Mucosa of descending colon (tissue), 3 donors: ENCODE measurements at regions of chr10 and their contacts with region 1.

Region 1: GRCh38 chr10:4849555-4850242 is 23.7 kb downstream of the AKR1E2 start:
- DNase-seq: peak; percentile 89 to 96 (median 92)
- ATAC-seq: peak; percentile 98
- H3K4me3 ChIP-seq: no peak overlapping the region
- H3K4me1 ChIP-seq: no peaks in the 10 kb centered on the region
- CTCF ChIP-seq: peak; percentile 87

Region 2: GRCh38 chr10:5094265-5095205 is 244.8 kb after region 1 on chr10 and contains the start of gene AKR1C3:
- intact Hi-C with region 1: loop called in 1 of 2 experiments (anchors 10 kb)
- DNase-seq: peak in 1 of 3 donors; percentile 29
- ATAC-seq: peak; percentile 87
- H3K4me3 ChIP-seq: peak within 1 kb of the TSS; percentile 15
- H3K4me1 ChIP-seq: peaks cover 5% of the 10 kb centered on the region
- CTCF ChIP-seq: peak; percentile 60
- total RNA-seq, gene AKR1C3: 110 to 384 (median 308) TPM

Region 3: GRCh38 chr10:5105626-5106025 is 255.9 kb after region 1 on chr10:
- intact Hi-C with region 1: loop called in 1 of 2 experiments (anchors 10 kb)
- DNase-seq: no peak
- ATAC-seq: no peak
- H3K4me3 ChIP-seq: no peak overlapping the region
- H3K4me1 ChIP-seq: no peaks in the 10 kb centered on the region
- CTCF ChIP-seq: no peak

Region 4: GRCh38 chr10:5274795-5275194 is 425.1 kb after region 1 on chr10:
- intact Hi-C with region 1: loop called in 1 of 2 experiments (anchors 10 kb)
- DNase-seq: no peak
- ATAC-seq: no peak
- H3K4me3 ChIP-seq: no peak overlapping the region
- H3K4me1 ChIP-seq: no peaks in the 10 kb centered on the region
- CTCF ChIP-seq: no peak

Region 5: GRCh38 chr10:5283305-5284158 is 433.8 kb after region 1 on chr10:
- intact Hi-C with region 1: loop called (anchors 5 to 10 kb)
- DNase-seq: peak in 2 of 3 donors; percentile 73 to 75
- ATAC-seq: peak; percentile 95
- H3K4me3 ChIP-seq: no peak overlapping the region
- H3K4me1 ChIP-seq: no peaks in the 10 kb centered on the region
- CTCF ChIP-seq: peak; percentile 34

Region 6: GRCh38 chr10:5385224-5385623 is 535.5 kb after region 1 on chr10:
- intact Hi-C with region 1: loop called in 1 of 2 experiments (anchors 10 kb)
- DNase-seq: no peak
- ATAC-seq: no peak
- H3K4me3 ChIP-seq: no peak overlapping the region
- H3K4me1 ChIP-seq: no peaks in the 10 kb centered on the region
- CTCF ChIP-seq: no peak

Region 7: GRCh38 chr10:5423771-5424170 is 574.1 kb after region 1 on chr10:
- intact Hi-C with region 1: loop called in 1 of 2 experiments (anchors 10 kb)
- DNase-seq: no peak
- ATAC-seq: no peak
- H3K4me3 ChIP-seq: no peak overlapping the region
- H3K4me1 ChIP-seq: no peaks in the 10 kb centered on the region
- CTCF ChIP-seq: no peak